ENCODE measurements at regions of chr11 and their contacts with region 1.

Region 1: DNA sequence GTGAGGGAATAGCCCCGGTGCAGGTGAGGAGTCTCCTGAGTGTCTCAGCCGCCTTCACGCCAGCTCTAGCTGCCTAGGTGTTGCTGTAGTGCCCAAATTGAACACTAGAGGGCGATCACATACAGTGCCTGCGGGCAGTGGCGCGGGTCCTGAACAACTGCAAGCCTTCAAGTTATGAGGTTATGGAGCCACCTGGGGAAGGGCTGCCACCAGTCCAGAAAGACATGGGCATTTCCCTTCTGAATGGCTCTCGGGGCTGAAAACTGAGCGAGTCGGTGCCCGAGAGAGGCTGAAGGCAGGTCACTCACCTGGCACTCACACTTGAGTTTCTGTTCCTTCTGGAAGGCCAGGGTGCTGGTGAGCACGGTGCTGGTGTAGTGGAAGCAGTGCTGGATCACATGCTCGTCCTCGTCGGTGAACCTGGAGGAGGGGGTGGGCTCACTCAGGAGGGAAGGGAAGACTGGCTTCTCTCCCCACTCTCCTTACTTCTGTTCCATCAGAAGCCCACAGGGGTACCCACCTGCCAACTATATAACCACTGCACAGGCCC is 88.4 kb downstream of the PDE2A start:
- DNase-seq: peak; percentile 77
- ATAC-seq: peak; percentile 73
- H3K4me3 Mint-ChIP-seq: no peak overlapping the region
- H3K27ac Mint-ChIP-seq: no peak overlapping the region
- H3K4me1 Mint-ChIP-seq: peaks cover 30% of the 10 kb centered on the region
- H3K27me3 Mint-ChIP-seq: peaks cover 49% of the 10 kb centered on the region

Region 2: GRCh38 chr11:72483412-72484186 is 102.2 kb before region 1 on chr11:
- CTCF ChIA-PET with region 1: interaction called, 10 read pairs
- POLR2A ChIA-PET with region 1: interaction called, 3 read pairs
- DNase-seq: peak; percentile 26
- ATAC-seq: peak; percentile 43
- H3K4me3 Mint-ChIP-seq: no peak overlapping the region
- H3K27ac Mint-ChIP-seq: peak overlapping the region; percentile 10
- H3K4me1 Mint-ChIP-seq: peaks cover 20% of the 10 kb centered on the region
- H3K27me3 Mint-ChIP-seq: peaks cover 11% of the 10 kb centered on the region

Region 3: GRCh38 chr11:72609045-72609444 is 23.2 kb after region 1 on chr11:
- CTCF ChIA-PET with region 1: interaction called, 104 read pairs
- POLR2A ChIA-PET with region 1: no interaction called
- DNase-seq: peak; percentile 39
- ATAC-seq: peak; percentile 57
- H3K4me3 Mint-ChIP-seq: no peak overlapping the region
- H3K27ac Mint-ChIP-seq: no peak overlapping the region
- H3K4me1 Mint-ChIP-seq: peaks cover 24% of the 10 kb centered on the region
- H3K27me3 Mint-ChIP-seq: peaks cover 38% of the 10 kb centered on the region

Region 4: GRCh38 chr11:72642884-72643511 is 57.2 kb after region 1 on chr11:
- CTCF ChIA-PET with region 1: interaction called, 37 read pairs
- POLR2A ChIA-PET with region 1: no interaction called
- DNase-seq: peak; percentile 69
- ATAC-seq: peak; percentile 85
- H3K4me3 Mint-ChIP-seq: no peak overlapping the region
- H3K27ac Mint-ChIP-seq: no peak overlapping the region
- H3K4me1 Mint-ChIP-seq: peaks cover 2% of the 10 kb centered on the region
- H3K27me3 Mint-ChIP-seq: peaks cover 9% of the 10 kb centered on the region